HEK293 (cell line): ENCODE measurements at regions of chr22 and their contacts with region 1.

Region 1: GRCh38 chr22:20981787-20982562 is at the start of gene LZTR1:
- H3K4me3 ChIP-seq: peak within 1 kb of the TSS; percentile 78
- H3K27ac ChIP-seq: peak within 1 kb of the TSS; percentile 62
- H3K4me1 ChIP-seq: no peaks in the 10 kb centered on the region
- CTCF ChIP-seq: peak; percentile 92

Region 2: GRCh38 chr22:20656902-20657836 is 324.8 kb before region 1 on chr22:
- CTCF ChIA-PET with region 1: no interaction called
- POLR2A ChIA-PET with region 1: no interaction called
- H3K4me3 ChIP-seq: no peak overlapping the region
- H3K27ac ChIP-seq: no peak overlapping the region
- H3K4me1 ChIP-seq: no peaks in the 10 kb centered on the region
- CTCF ChIP-seq: no peak

Region 3: GRCh38 chr22:20916983-20917810 is 64.8 kb before region 1 on chr22 and contains the start of gene CRKL:
- CTCF ChIA-PET with region 1: no interaction called
- POLR2A ChIA-PET with region 1: interaction called, 17 read pairs
- H3K4me3 ChIP-seq: peak within 1 kb of the TSS; percentile 76
- H3K27ac ChIP-seq: peak within 1 kb of the TSS; percentile 82
- H3K4me1 ChIP-seq: peaks cover 4% of the 10 kb centered on the region; the same call in 1 of the 2 replicates
- CTCF ChIP-seq: peak; percentile 98

Region 4: GRCh38 chr22:20922141-20922751 is 59.7 kb before region 1 on chr22:
- CTCF ChIA-PET with region 1: interaction called, 5 read pairs
- POLR2A ChIA-PET with region 1: interaction called, 17 read pairs
- H3K4me3 ChIP-seq: no peak overlapping the region
- H3K27ac ChIP-seq: no peak overlapping the region
- H3K4me1 ChIP-seq: peaks cover 11% of the 10 kb centered on the region; the same call in 1 of the 2 replicates
- CTCF ChIP-seq: no peak

Region 5: DNA sequence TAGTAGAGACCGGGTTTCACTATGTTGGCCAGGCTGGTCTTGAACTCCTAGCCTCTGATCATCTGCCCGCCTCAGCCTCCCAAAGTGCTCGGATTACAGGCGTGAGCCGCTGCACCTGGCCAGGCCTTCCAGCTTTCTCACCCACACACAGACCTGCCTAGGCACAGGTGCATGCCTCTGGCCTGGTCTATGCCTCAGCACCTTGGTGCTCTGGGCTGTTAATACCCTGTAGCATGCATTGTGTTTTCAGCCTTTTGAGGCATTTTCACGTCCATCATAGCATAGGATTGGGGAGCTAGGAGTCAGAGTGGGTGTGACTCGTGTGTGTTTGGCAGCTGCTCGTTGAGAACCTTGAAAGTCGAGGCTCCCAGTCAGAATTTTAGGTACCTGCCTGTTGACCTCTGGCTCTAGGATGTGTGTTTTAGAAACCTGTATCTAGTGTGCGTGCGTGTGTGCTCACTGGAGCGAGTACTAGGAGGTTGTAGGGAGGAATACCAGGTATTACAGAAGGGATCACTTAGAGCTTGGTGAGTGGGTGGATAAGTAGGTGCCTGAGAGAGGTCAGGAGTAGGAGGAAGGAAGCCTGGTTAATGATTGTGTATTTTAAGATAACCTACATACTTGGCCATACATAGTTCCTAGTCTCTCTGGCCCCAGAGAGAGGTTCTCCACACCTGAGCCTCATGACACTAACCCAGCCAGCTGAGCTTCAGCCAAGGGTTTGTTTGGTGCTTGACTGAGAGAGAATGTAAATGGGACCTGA is 44.8 kb before region 1 on chr22:
- CTCF ChIA-PET with region 1: no interaction called
- POLR2A ChIA-PET with region 1: interaction called, 10 read pairs
- H3K4me3 ChIP-seq: no peak overlapping the region
- H3K27ac ChIP-seq: 0 out of 2 replicates have a peak overlapping the region, but pooled peaks have one; percentile 7
- H3K4me1 ChIP-seq: no peaks in the 10 kb centered on the region; the same call in 1 of the 2 replicates
- CTCF ChIP-seq: no peak

Region 6: DNA sequence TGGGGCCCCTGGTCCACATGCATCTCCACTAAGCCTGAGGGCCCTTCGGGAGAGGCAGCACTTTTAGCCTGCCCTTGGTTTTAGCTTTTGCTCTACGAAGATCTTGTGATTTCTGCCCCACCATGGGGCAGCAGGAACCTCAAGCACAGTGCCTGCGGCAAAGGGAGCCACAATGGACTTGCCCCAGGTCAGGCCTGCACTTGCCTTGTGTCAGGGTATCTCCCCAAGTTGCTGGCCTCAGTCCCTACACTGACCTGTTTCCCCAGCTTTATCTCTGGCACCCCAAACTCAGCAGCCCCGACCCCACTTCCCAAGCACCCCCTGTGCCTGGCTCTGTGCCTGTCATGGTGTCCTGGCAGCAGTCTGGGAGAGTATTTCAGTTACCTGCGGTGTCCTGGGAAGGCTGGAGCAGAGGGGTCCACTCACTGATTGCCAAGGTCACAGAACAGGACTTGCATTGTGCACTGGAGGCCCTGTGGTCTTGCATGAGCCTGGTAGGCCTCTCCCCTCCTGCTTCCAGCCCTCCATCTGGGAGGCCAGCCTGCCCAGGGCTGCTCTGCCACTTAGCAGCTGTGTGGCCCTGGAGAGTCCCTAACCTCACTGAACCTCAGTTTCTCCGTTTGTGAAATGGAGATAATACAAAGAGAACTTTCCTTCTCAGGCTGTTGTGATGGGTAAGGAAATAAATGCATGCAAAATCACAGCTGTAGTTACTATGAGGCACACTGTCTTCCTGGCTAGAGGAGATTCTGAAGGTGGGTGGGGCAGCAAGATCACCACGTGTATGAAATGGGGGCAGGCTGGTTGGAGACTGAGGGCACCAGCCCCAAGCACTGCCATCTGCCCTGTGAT is 18.5 kb before region 1 on chr22:
- CTCF ChIA-PET with region 1: interaction called, 14 read pairs
- POLR2A ChIA-PET with region 1: interaction called, 19 read pairs
- H3K4me3 ChIP-seq: no peak overlapping the region
- H3K27ac ChIP-seq: no peak overlapping the region
- H3K4me1 ChIP-seq: no peaks in the 10 kb centered on the region
- CTCF ChIP-seq: no peak

Region 7: DNA sequence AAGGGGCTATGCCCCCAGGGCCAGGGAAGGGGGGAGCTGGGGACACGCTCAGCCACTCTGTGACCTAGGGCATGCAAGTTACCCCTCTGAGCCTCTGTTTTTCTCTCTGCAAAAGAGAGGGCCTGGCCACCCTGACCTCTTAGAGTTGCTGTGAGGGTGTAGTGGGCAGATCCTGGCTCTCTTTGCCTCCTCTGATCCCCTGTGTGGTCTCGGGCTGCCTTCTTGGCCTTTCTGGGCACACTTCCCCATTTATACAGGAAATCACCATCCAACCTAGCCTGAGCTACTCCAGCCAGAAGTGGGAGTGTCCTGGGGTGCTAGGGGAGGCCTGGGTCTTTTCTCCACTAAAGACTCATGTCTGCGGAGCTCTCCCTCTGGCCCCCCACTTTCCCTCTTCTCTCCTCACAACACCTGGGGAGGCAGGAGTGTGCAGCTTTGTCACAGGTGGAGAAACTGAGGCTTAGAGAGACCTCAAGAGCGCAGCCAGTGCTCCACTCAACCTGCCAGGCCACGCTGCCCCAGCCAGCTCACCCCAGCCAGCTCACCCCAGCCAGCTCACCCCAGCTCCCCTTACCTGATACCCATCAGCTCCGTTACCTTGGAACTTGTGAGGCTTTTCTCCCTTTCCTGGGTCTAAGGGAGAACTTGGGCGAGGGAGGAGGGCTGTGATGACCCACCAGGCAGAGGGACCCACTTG is 13.5 kb before region 1 on chr22:
- CTCF ChIA-PET with region 1: interaction called, 14 read pairs
- POLR2A ChIA-PET with region 1: interaction called, 27 read pairs
- H3K4me3 ChIP-seq: no peak overlapping the region
- H3K27ac ChIP-seq: no peak overlapping the region
- H3K4me1 ChIP-seq: no peaks in the 10 kb centered on the region
- CTCF ChIP-seq: no peak

Region 8: GRCh38 chr22:21001560-21002325 is 19.8 kb after region 1 on chr22 and contains the start of gene THAP7:
- CTCF ChIA-PET with region 1: interaction called, 4 read pairs
- POLR2A ChIA-PET with region 1: interaction called, 80 read pairs
- H3K4me3 ChIP-seq: peak within 1 kb of the TSS; percentile 83
- H3K27ac ChIP-seq: peak within 1 kb of the TSS; percentile 65
- H3K4me1 ChIP-seq: no peaks in the 10 kb centered on the region
- CTCF ChIP-seq: 0 out of 2 replicates have a peak, but pooled peaks have one; percentile 34

Region 9: DNA sequence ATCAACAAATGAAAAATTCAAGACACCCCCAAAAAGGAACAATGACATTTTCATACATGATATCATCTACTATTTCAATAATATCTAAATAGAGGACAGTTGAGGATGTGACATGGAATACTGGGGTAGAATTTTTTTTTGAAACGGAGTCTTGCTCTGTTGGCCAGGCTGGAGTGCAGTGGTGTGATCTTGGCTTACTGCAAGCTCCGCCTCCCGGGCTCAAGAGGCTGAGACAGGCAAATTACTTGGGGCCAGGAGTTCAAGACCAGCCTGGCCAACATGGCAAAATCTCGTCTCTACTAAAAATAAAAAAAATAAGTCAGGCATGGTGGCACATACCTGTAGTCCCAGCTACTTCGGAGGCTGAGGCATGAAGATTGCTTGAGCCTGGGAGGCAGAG is 105.1 kb after region 1 on chr22:
- CTCF ChIA-PET with region 1: no interaction called
- POLR2A ChIA-PET with region 1: no interaction called
- H3K4me3 ChIP-seq: no peak overlapping the region
- H3K27ac ChIP-seq: no peak overlapping the region
- H3K4me1 ChIP-seq: no peaks in the 10 kb centered on the region
- CTCF ChIP-seq: no peak